Activated CD8-positive, alpha-beta T cell treated with anti-CD3 and anti-CD28 coated beads, Interleukin-2, amount 10 ng/mL, durations not matched to agents 7 days and 5 days (primary cell): ENCODE measurements at regions of chr19 and their contacts with region 1.

Region 1: DNA sequence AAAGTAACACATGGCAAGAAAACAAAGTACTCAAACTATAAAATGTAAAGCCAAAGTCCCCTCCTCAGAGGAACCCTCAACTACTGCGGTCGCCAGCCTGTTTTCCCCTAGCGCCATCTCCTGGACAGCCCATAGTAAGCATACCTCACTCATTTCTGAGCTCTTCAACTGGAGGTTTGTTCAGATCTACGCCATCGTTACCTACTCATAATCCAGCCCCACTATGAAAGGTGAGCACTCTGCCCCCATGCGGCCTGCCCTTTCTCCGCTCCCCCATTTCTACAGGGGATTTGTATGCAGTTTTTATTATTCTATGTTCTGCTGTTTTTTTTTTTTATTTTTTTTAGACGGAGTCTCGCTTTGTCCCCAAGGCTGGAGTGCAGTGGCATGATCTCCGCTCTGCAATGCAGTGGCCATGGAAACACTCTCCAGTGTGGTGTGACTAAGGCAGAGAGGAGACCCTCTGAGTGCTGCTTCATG is 26.2 kb downstream of the OPA3 start:
- DNase-seq: peak; percentile 82
- ATAC-seq: peak; percentile 98
- H3K4me3 Mint-ChIP-seq: no peak overlapping the region
- H3K27ac Mint-ChIP-seq: peak overlapping the region; percentile 62
- H3K4me1 Mint-ChIP-seq: peaks cover 28% of the 10 kb centered on the region
- H3K27me3 Mint-ChIP-seq: no peaks in the 10 kb centered on the region

Region 2: GRCh38 chr19:45515081-45515624 is 43.3 kb before region 1 on chr19:
- CTCF ChIA-PET with region 1: interaction called, 13 read pairs
- POLR2A ChIA-PET with region 1: no interaction called
- DNase-seq: no peak
- ATAC-seq: peak; percentile 41
- H3K4me3 Mint-ChIP-seq: peak overlapping the region; percentile 57
- H3K27ac Mint-ChIP-seq: peak overlapping the region; percentile 85
- H3K4me1 Mint-ChIP-seq: peaks cover 71% of the 10 kb centered on the region
- H3K27me3 Mint-ChIP-seq: no peaks in the 10 kb centered on the region

Region 3: GRCh38 chr19:45526143-45526542 is 32.3 kb before region 1 on chr19:
- CTCF ChIA-PET with region 1: interaction called, 19 read pairs
- POLR2A ChIA-PET with region 1: no interaction called
- DNase-seq: no peak
- ATAC-seq: no peak
- H3K4me3 Mint-ChIP-seq: no peak overlapping the region
- H3K27ac Mint-ChIP-seq: no peak overlapping the region
- H3K4me1 Mint-ChIP-seq: peaks cover 28% of the 10 kb centered on the region
- H3K27me3 Mint-ChIP-seq: peaks cover 2% of the 10 kb centered on the region

Region 4: GRCh38 chr19:45542234-45542668 is 16.2 kb before region 1 on chr19:
- CTCF ChIA-PET with region 1: interaction called, 30 read pairs
- POLR2A ChIA-PET with region 1: no interaction called
- DNase-seq: no peak
- ATAC-seq: no peak
- H3K4me3 Mint-ChIP-seq: no peak overlapping the region
- H3K27ac Mint-ChIP-seq: no peak overlapping the region
- H3K4me1 Mint-ChIP-seq: peaks cover 2% of the 10 kb centered on the region
- H3K27me3 Mint-ChIP-seq: no peaks in the 10 kb centered on the region

Region 5: GRCh38 chr19:45547976-45548609 is 10.3 kb before region 1 on chr19:
- CTCF ChIA-PET with region 1: interaction called, 30 read pairs
- POLR2A ChIA-PET with region 1: no interaction called
- DNase-seq: no peak
- ATAC-seq: no peak
- H3K4me3 Mint-ChIP-seq: no peak overlapping the region
- H3K27ac Mint-ChIP-seq: no peak overlapping the region
- H3K4me1 Mint-ChIP-seq: peaks cover 2% of the 10 kb centered on the region
- H3K27me3 Mint-ChIP-seq: no peaks in the 10 kb centered on the region

Region 6: DNA sequence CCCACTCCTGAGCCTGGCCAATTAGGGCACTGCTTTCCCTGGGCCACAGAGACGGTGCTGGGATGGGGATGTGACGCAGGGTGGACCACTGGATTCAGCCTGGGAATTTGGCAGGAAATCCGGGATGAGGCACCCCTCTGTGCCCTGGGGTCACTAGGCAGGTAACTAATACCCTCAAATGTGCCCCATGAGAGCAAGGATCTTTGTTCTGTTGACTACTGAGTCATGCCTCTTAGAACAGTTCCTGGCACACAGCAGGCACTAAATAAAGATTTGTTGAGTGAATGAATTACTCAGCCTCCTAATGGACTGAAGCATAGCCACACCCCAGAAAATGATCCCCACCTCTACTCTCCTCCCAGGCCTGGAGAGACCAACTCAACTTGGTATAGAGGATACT is 10.3 kb after region 1 on chr19:
- CTCF ChIA-PET with region 1: interaction called, 15 read pairs
- POLR2A ChIA-PET with region 1: interaction called, 3 read pairs
- DNase-seq: no peak
- ATAC-seq: no peak
- H3K4me3 Mint-ChIP-seq: no peak overlapping the region
- H3K27ac Mint-ChIP-seq: no peak overlapping the region
- H3K4me1 Mint-ChIP-seq: peaks cover 16% of the 10 kb centered on the region
- H3K27me3 Mint-ChIP-seq: no peaks in the 10 kb centered on the region

Region 7: DNA sequence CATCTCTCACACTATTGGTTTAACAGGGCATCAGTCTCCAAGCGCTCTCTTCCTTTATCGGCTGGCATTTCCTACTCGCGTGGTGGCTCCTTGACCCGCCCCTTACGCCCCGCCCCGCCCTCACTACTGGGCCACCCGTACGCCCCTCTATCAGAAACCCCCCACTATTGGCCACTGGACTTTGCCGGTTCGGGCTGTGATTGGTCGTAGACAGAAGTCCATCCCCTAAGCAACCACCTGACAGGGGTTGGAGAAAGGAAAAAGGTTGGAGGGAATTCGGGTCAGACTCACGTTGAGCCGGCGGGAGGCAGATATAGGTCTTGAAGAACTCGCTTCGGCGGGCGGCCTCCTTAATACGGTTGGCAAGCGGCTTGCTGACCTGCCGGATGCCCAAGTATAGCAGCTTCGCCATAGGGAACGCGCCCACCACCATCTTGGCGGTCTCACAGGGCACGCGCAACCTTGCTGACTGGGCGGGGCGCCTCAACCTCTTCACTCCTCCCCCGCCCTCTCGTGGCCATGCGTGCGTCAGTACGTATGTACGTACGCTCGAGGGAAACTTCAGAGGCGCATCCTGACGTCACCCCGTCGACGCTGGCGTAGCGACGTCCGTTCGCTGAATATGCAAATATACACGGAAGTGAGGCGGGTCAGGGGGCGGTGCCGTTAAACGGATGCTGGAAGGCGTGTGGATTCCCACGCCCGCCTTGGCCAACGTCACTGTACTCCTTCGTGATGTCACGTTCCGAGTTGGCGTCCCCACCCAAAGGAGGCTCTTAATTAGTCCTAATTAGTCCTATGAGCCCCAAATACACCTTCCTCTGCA is 26.1 kb after region 1 on chr19 and contains the start of gene OPA3:
- CTCF ChIA-PET with region 1: interaction called, 13 read pairs
- POLR2A ChIA-PET with region 1: no interaction called
- DNase-seq: peak; percentile 100
- ATAC-seq: peak; percentile 96
- H3K4me3 Mint-ChIP-seq: peak within 1 kb of the TSS; percentile 92
- H3K27ac Mint-ChIP-seq: peak within 1 kb of the TSS; percentile 97
- H3K4me1 Mint-ChIP-seq: peaks cover 15% of the 10 kb centered on the region
- H3K27me3 Mint-ChIP-seq: peaks cover 6% of the 10 kb centered on the region
- total RNA-seq, gene OPA3: 13.4 to 14.9 TPM